Head of caudate nucleus (tissue), 42 donors: ENCODE measurements at regions of chr5 and their contacts with region 1.

Region 1: DNA sequence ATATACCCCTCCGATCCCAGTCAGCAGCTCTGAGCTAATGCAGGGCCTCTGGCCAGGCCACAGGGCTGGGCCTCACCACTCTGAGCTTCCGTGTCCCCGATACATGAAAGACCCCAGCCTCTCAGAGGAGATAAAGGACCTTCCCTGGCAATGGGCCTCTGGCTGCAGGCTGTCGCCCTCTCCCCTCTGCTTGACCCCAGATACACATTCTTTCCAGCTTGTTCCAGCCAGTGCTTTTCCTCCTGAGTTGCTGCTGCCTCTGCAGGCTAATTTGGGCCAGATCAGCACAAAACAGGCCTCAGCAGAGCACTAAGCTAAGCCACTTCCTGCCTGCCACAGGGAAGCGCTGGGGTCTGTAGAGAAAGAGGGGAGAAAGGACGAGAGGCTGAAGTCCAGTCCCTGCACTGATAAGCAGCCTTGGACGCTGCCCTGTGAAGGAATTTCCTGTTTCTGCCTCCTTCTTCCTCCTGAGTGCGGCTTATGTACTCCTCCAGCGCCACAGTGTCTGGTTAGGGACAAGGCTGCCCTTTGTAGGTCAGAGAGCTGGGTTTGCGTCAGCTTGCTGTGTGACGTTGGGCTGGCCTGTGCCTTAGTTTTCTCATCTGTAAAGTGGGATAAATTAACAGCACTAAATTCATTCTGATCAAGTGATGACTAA is 73.0 kb upstream of the IL17B start:
- DNase-seq: peak in 3 of 42 donors; percentile 20 to 43 (median 22)

Region 2: DNA sequence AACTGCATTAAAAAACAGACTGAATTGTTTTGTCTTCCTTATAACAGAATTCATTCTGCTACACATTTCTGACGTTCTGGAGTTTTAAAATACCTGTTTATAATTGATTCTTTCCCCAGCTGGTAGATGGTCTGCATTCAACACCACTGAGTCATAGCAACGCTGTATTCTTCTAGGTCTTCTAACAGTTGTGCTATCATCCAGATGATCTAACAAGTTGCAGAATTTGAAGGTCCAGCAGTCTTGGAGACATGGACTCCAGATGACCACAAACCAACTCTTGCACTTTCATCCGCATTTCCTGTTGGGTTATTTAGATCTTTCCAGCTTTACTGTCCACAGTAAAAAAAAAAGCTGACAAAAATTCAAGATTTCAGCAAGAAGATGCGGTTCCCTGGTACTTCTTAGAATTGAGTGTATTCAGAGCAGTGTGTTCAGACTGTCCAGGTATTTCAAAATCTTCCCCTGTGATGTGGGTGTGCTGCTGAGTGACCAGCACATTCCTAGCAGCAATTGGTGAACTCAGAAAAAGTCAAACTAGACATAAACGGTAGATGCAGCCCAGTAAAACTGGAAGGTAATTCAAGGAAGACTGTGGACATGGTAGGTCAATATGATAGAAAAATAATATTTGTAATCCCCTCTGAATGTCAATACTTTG is 48.9 kb after region 1 on chr5:
- intact Hi-C with region 1: loop called (anchors 10 kb)
- DNase-seq: no peak